WTC11 (cell line): ENCODE measurements at regions of chr16 and their contacts with region 1.

Region 1: GRCh38 chr16:26645614-26646013 is 421.1 kb upstream of the C16orf82 start:
- DNase-seq: peak; percentile 80
- ATAC-seq: peak; percentile 95
- H3K4me3 Mint-ChIP-seq: no peak overlapping the region
- H3K27ac Mint-ChIP-seq: no peak overlapping the region
- H3K4me1 Mint-ChIP-seq: peaks cover 13% of the 10 kb centered on the region
- H3K27me3 Mint-ChIP-seq: no peaks in the 10 kb centered on the region
- CTCF ChIP-seq: peak; percentile 79

Region 2: DNA sequence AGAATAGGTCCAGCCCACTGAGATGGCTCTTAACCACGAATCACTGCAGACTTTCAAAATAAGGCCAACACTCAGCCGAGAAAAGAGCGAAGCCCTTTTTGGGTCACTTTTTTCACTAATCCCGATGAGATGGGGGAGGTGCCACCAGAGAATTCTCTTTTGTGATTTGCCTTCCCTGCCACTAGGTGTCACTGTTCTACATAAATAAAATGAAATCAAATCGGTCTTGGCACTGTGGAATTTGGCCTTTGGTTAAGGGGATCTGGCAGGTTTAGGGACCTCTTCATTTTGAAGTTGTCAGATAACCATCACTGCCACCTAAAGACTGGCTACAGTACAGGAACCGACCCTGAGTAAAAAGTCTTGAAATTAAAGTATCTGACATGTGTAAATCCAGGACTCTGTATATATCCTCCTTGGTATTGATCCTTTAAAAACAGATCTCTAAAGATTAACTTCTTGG is 806.9 kb before region 1 on chr16:
- CTCF ChIA-PET with region 1: interaction called, 10 read pairs
- POLR2A ChIA-PET with region 1: no interaction called
- DNase-seq: peak; percentile 19
- ATAC-seq: peak; percentile 70
- H3K4me3 Mint-ChIP-seq: peak overlapping the region; percentile 52
- H3K27ac Mint-ChIP-seq: no peak overlapping the region
- H3K4me1 Mint-ChIP-seq: peaks cover 32% of the 10 kb centered on the region
- H3K27me3 Mint-ChIP-seq: no peaks in the 10 kb centered on the region; the same call in 1 of the 2 replicates
- CTCF ChIP-seq: peak; percentile 78

Region 3: GRCh38 chr16:26453215-26453614 is 192.4 kb before region 1 on chr16:
- CTCF ChIA-PET with region 1: interaction called, 16 read pairs
- POLR2A ChIA-PET with region 1: no interaction called
- DNase-seq: no peak
- ATAC-seq: no peak; the same call in 1 of the 2 replicates
- H3K4me3 Mint-ChIP-seq: no peak overlapping the region
- H3K27ac Mint-ChIP-seq: no peak overlapping the region
- H3K4me1 Mint-ChIP-seq: peaks cover 3% of the 10 kb centered on the region; the same call in 1 of the 2 replicates
- H3K27me3 Mint-ChIP-seq: no peaks in the 10 kb centered on the region
- CTCF ChIP-seq: no peak

Region 4: GRCh38 chr16:26569793-26570192 is 75.8 kb before region 1 on chr16:
- CTCF ChIA-PET with region 1: interaction called, 32 read pairs
- POLR2A ChIA-PET with region 1: no interaction called
- DNase-seq: peak; percentile 36
- ATAC-seq: peak; percentile 96
- H3K4me3 Mint-ChIP-seq: no peak overlapping the region
- H3K27ac Mint-ChIP-seq: no peak overlapping the region
- H3K4me1 Mint-ChIP-seq: peaks cover 4% of the 10 kb centered on the region
- H3K27me3 Mint-ChIP-seq: no peaks in the 10 kb centered on the region
- CTCF ChIP-seq: no peak

Region 5: GRCh38 chr16:26672206-26672605 is 26.6 kb after region 1 on chr16:
- CTCF ChIA-PET with region 1: interaction called, 16 read pairs
- POLR2A ChIA-PET with region 1: no interaction called
- DNase-seq: no peak
- ATAC-seq: no peak
- H3K4me3 Mint-ChIP-seq: no peak overlapping the region
- H3K27ac Mint-ChIP-seq: no peak overlapping the region
- H3K4me1 Mint-ChIP-seq: peaks cover 7% of the 10 kb centered on the region
- H3K27me3 Mint-ChIP-seq: no peaks in the 10 kb centered on the region; the same call in none of the 2 replicates
- CTCF ChIP-seq: no peak

Region 6: GRCh38 chr16:26717826-26718225 is 72.2 kb after region 1 on chr16:
- CTCF ChIA-PET with region 1: no interaction called
- POLR2A ChIA-PET with region 1: no interaction called
- DNase-seq: peak; percentile 24
- ATAC-seq: no peak
- H3K4me3 Mint-ChIP-seq: no peak overlapping the region
- H3K27ac Mint-ChIP-seq: no peak overlapping the region
- H3K4me1 Mint-ChIP-seq: no peaks in the 10 kb centered on the region
- H3K27me3 Mint-ChIP-seq: no peaks in the 10 kb centered on the region
- CTCF ChIP-seq: no peak